A673 (cell line): ENCODE measurements at regions of chr2 and their contacts with region 1.

Region 1: GRCh38 chr2:129936334-129936934 is 43.0 kb upstream of the RAB6C start:
- DNase-seq: peak; percentile 40
- H3K4me3 ChIP-seq: no peak overlapping the region
- H3K27ac ChIP-seq: no peak overlapping the region
- H3K4me1 ChIP-seq: no peaks in the 10 kb centered on the region
- H3K27me3 ChIP-seq: peaks cover 9% of the 10 kb centered on the region
- CTCF ChIP-seq: peak; percentile 59

Region 2: DNA sequence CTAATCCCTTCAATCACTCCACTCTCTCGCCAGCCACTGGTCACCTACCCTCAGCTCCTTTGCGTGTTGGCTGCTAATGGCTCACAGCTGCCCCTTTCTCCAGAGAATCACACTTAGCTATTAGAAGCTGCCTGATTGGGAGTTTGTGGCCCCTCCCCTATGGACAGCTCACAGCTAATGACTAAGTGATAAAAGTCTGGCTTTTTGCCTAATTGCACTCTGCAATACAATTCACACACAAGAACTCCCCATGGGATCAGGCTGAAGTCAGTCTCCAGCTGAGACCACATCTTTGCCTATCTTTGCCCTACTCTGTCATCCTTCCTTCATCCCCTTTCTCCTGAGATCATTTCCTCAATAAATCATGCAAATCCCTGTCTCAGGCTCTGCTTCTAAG is 658.9 kb before region 1 on chr2:
- CTCF ChIA-PET with region 1: no interaction called
- POLR2A ChIA-PET with region 1: no interaction called
- intact Hi-C with region 1: no loop called
- DNase-seq: peak; percentile 94
- H3K4me3 ChIP-seq: no peak overlapping the region
- H3K27ac ChIP-seq: peak overlapping the region; percentile 71
- H3K4me1 ChIP-seq: peaks cover 10% of the 10 kb centered on the region
- H3K27me3 ChIP-seq: no peaks in the 10 kb centered on the region
- CTCF ChIP-seq: no peak

Region 3: DNA sequence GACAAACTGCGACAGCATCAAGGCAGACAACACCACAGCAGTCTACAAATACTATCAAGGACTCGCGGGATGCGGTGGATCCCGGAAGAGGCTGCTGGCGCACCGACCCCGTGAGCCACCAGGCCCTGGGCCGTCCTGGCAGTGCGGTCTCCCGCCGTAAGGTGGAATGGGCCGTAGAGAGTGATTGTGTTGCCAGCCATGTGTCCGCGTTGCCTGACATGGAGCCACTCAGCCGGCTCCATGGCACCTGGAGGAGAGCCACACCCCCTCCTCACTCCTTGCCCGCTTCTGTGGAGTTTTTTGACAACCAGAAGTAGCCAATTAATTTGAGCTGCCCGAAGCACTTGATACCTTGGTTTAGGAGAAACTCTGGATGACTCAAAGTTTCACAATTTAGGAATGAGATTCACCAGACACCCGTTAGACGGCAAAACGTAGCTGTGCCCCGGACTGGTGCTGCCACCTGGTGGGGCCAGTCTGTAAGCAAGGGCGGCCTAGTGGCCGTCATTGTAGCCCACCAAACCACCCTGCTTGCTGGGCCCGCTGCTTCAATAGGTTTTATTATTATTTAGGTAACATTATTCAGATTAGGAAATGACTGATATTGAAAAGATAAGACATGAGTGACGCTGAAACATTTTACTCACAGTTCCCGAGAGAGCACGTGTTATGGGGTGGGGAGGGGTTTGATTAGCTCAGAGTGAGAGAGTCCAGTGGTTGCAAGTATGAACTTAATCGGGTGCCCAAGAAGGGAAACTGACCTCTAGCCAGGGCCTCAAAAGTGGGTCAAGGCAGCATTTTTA is 396.0 kb after region 1 on chr2:
- CTCF ChIA-PET with region 1: interaction called, 5 read pairs
- POLR2A ChIA-PET with region 1: no interaction called
- intact Hi-C with region 1: loop called (anchors 1 kb)
- DNase-seq: peak; percentile 83
- H3K4me3 ChIP-seq: peak overlapping the region; percentile 35
- H3K27ac ChIP-seq: no peak overlapping the region
- H3K4me1 ChIP-seq: no peaks in the 10 kb centered on the region
- H3K27me3 ChIP-seq: peaks cover 42% of the 10 kb centered on the region
- CTCF ChIP-seq: peak; percentile 95